ENCODE measurements at regions of chr2 and their contacts with region 1.

Region 1: GRCh38 chr2:85707304-85707703 is 13.1 kb downstream of the GNLY start:
- DNase-seq: peak; percentile 85
- H3K4me3 ChIP-seq: no peak overlapping the region
- H3K27ac ChIP-seq: no peak overlapping the region
- H3K4me1 ChIP-seq: peaks cover 29% of the 10 kb centered on the region
- H3K27me3 ChIP-seq: no peaks in the 10 kb centered on the region
- CTCF ChIP-seq: peak; percentile 91 to 92

Region 2: GRCh38 chr2:85230679-85231467 is 476.4 kb before region 1 on chr2:
- CTCF ChIA-PET with region 1: no interaction called
- dilution Hi-C with region 1: no loop called
- in situ Hi-C with region 1: no loop called
- intact Hi-C with region 1: no loop called
- DNase-seq: no peak
- H3K4me3 ChIP-seq: no peak overlapping the region
- H3K27ac ChIP-seq: no peak overlapping the region
- H3K4me1 ChIP-seq: no peaks in the 10 kb centered on the region
- H3K27me3 ChIP-seq: no peaks in the 10 kb centered on the region
- CTCF ChIP-seq: peak in 1 of 2 donors; percentile 4

Region 3: DNA sequence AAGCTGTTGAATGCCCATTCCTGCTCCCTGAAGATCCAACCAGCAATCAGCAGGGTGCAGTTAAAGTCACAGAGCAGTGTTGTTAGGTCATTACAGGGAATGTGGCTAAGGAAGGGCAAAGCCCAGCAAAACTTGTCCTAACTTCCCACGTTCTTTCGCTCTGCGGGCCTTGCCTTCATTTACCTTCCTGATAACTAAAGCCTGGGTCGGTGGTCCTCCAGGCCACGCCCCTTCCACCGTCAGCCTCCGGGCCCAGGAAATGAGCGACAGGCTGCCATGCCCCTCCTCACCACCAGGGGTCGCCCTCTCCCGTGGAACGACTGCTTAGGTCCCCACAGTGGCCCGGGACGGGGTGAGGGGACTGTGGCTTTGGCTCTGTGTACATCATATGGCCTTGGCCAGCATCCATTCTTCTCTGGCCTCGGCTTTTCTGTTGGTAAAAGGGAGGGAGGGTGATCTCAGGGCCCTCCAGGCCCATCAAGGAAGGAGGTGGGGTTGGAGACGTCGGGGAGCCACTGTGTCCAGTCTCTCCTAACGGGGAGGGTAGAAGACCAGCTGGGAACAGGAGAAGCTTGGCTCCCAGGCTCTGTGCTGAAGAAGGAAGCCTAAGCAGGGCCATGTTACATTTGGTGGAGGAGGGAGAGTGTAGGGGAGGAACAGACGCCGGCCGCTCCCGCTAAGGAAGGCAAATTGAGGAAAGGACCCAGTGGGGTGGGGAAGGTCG is 286.6 kb before region 1 on chr2:
- CTCF ChIA-PET with region 1: interaction called, 3 read pairs
- dilution Hi-C with region 1: no loop called
- in situ Hi-C with region 1: no loop called
- intact Hi-C with region 1: loop called (anchors 10 kb)
- DNase-seq: peak; percentile 21
- H3K4me3 ChIP-seq: peak overlapping the region in 1 of 3 experiments; percentile 12
- H3K27ac ChIP-seq: no peak overlapping the region
- H3K4me1 ChIP-seq: peaks cover 30% of the 10 kb centered on the region
- H3K27me3 ChIP-seq: no peaks in the 10 kb centered on the region
- CTCF ChIP-seq: peak; percentile 96 to 99

Region 4: DNA sequence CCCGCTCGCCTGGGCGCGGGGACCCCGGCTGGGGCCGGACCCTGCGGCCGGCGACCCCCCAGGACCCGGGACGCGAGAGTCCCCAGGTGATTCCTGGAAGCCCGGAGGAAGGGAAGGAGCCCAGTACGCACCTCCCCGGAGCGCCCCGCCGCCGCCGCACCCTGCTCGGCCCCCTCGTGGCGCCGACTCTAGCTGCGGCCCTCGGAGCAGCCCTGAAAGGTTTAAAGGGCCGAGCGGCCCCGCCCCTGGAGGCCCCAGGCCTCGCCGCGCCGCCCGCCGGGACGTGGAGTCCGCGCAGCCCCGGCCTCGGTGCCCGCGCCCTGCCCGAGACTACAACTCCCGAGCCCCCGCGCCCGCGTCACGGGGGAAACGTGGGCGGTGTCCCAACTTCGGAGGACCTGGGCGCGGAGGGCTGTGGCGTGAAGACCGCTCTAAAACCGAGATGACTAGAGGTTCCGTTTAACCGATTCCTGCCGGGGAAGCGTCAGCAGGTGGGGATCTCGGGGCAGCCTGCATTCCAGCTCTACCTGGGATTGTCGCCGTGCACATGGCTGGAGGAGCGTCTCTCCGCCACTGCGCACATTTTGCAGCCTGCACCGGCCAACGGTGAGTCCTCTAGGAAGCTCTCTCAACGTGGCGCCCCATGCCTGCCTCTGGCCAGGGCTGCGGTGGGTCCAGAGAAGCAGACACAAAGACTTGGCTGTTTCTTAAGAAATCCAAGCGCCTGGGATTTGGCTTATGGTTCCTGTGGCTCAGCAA is 104.6 kb before region 1 on chr2 and contains the start of gene TMEM150A:
- CTCF ChIA-PET with region 1: no interaction called
- dilution Hi-C with region 1: loop called (anchors 5 kb)
- in situ Hi-C with region 1: no loop called
- intact Hi-C with region 1: no loop called
- DNase-seq: peak; percentile 90
- H3K4me3 ChIP-seq: peak within 1 kb of the TSS; percentile 69 to 94 (median 74)
- H3K27ac ChIP-seq: peak within 1 kb of the TSS; percentile 11
- H3K4me1 ChIP-seq: peaks cover 22% of the 10 kb centered on the region
- H3K27me3 ChIP-seq: no peaks in the 10 kb centered on the region
- CTCF ChIP-seq: peak in 1 of 2 donors; percentile 38
- total RNA-seq, gene TMEM150A: 12.5 to 14.2 TPM

Region 5: GRCh38 chr2:85642725-85643124 is 64.6 kb before region 1 on chr2:
- CTCF ChIA-PET with region 1: no interaction called
- dilution Hi-C with region 1: no loop called
- in situ Hi-C with region 1: no loop called
- intact Hi-C with region 1: loop called (anchors 1 kb)
- DNase-seq: no peak
- H3K4me3 ChIP-seq: no peak overlapping the region
- H3K27ac ChIP-seq: no peak overlapping the region
- H3K4me1 ChIP-seq: no peaks in the 10 kb centered on the region
- H3K27me3 ChIP-seq: no peaks in the 10 kb centered on the region
- CTCF ChIP-seq: no peak

Region 6: GRCh38 chr2:85655961-85656417 is 51.3 kb before region 1 on chr2:
- CTCF ChIA-PET with region 1: no interaction called
- dilution Hi-C with region 1: loop called (anchors 5 kb)
- in situ Hi-C with region 1: no loop called
- intact Hi-C with region 1: no loop called
- DNase-seq: no peak
- H3K4me3 ChIP-seq: no peak overlapping the region
- H3K27ac ChIP-seq: no peak overlapping the region
- H3K4me1 ChIP-seq: no peaks in the 10 kb centered on the region
- H3K27me3 ChIP-seq: no peaks in the 10 kb centered on the region
- CTCF ChIP-seq: no peak

Region 7: GRCh38 chr2:85678794-85679672 is 28.3 kb before region 1 on chr2:
- CTCF ChIA-PET with region 1: interaction called, 3 read pairs
- dilution Hi-C with region 1: no loop called
- in situ Hi-C with region 1: no loop called
- intact Hi-C with region 1: loop called (anchors 1 kb)
- DNase-seq: peak; percentile 71
- H3K4me3 ChIP-seq: peak overlapping the region in 1 of 3 experiments; percentile 25
- H3K27ac ChIP-seq: no peak overlapping the region
- H3K4me1 ChIP-seq: peaks cover 12% of the 10 kb centered on the region
- H3K27me3 ChIP-seq: no peaks in the 10 kb centered on the region
- CTCF ChIP-seq: peak; percentile 95 to 99

Region 8: DNA sequence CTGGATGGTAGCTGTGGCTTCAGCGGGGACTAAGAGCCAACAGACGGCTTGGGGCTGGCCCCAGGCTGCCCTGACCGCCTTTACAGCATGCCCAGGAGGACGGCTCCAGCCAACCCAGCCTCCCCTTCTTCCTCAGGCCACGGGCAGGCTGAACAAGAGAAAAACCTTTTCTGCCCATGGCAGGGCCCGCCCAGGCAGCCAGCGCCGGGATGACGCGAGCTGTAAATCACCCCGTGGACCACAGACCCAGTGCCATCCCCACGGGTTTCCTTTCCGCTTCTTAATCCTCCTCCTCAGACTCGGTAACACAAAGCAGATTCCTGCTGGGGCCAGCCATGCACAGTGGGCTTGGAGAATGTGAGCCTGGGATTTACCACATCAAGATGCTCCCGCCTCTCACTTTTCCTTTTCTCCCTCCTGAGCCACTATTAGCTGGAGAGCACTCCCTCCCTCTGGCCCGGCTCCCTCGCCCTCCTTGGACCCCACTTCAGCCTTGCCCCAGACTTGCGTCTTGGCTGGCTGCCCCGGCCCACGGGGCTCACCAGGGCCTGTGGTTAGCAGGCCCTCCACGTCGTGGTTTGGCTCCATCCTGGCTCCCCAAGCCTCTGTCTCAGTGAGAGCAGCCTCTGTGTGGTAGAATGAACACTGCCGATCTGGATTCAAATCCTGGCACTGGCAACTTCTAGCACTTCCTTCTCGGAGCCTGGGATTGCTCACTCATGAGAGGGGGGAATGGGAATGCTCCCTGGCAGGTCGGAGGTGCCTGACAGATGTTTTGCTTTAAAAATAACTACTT is 77.9 kb after region 1 on chr2:
- CTCF ChIA-PET with region 1: no interaction called
- dilution Hi-C with region 1: no loop called
- in situ Hi-C with region 1: no loop called
- intact Hi-C with region 1: no loop called
- DNase-seq: no peak
- H3K4me3 ChIP-seq: no peak overlapping the region
- H3K27ac ChIP-seq: no peak overlapping the region
- H3K4me1 ChIP-seq: no peaks in the 10 kb centered on the region
- H3K27me3 ChIP-seq: no peaks in the 10 kb centered on the region
- CTCF ChIP-seq: no peak

Region 9: DNA sequence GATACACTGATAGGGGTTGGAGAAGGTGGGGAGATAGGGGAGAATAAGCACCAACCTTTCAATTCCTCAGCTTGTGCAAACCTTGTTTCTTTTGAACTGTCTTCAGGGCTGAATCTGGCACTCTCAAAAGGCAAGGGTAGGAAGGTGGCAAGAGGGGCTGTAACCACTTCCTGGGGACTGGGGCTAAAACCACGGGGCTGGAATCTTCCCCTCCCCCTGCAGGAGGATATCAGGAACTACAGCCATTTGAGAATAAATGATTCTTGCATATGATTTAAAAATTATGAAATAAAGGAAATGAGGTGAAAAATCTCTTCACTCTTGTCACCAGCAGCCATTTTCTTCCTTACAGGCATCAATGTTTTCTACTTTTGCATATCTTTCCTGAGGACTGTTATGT is 97.3 kb after region 1 on chr2:
- CTCF ChIA-PET with region 1: no interaction called
- dilution Hi-C with region 1: loop called (anchors 5 kb)
- in situ Hi-C with region 1: no loop called
- intact Hi-C with region 1: no loop called
- DNase-seq: no peak
- H3K4me3 ChIP-seq: no peak overlapping the region
- H3K27ac ChIP-seq: no peak overlapping the region
- H3K4me1 ChIP-seq: peaks cover 2% of the 10 kb centered on the region
- H3K27me3 ChIP-seq: no peaks in the 10 kb centered on the region
- CTCF ChIP-seq: peak; percentile 58 to 66